ENCODE measurements at regions of chr11 and their contacts with region 1.

Region 1: GRCh38 chr11:120172054-120172911 is 34.4 kb upstream of the TRIM29 start:
- DNase-seq: peak; percentile 60
- ATAC-seq: peak; percentile 73
- H3K4me3 ChIP-seq: no peak overlapping the region
- H3K27ac ChIP-seq: no peak overlapping the region
- H3K4me1 ChIP-seq: no peaks in the 10 kb centered on the region; the same call in 1 of the 2 replicates
- H3K27me3 ChIP-seq: peaks cover 56% of the 10 kb centered on the region
- CTCF ChIP-seq: peak; percentile 94
- POLR2A ChIP-seq: peak; percentile 60; the same call in 1 of the 2 replicates
- RAD21 ChIP-seq: peak; percentile 97

Region 2: GRCh38 chr11:119666463-119667131 is 505.7 kb before region 1 on chr11:
- CTCF ChIA-PET with region 1: no interaction called
- POLR2A ChIA-PET with region 1: no interaction called
- dilution Hi-C with region 1: no loop called
- in situ Hi-C with region 1: no loop called
- intact Hi-C with region 1: loop called (anchors 1 kb)
- DNase-seq: peak; percentile 47
- ATAC-seq: peak; percentile 95
- H3K4me3 ChIP-seq: no peak overlapping the region
- H3K27ac ChIP-seq: no peak overlapping the region
- H3K4me1 ChIP-seq: peaks cover 4% of the 10 kb centered on the region; the same call in 1 of the 2 replicates
- H3K27me3 ChIP-seq: no peaks in the 10 kb centered on the region
- CTCF ChIP-seq: peak; percentile 94
- POLR2A ChIP-seq: peak; percentile 35; the same call in 1 of the 2 replicates
- RAD21 ChIP-seq: peak; percentile 98

Region 3: DNA sequence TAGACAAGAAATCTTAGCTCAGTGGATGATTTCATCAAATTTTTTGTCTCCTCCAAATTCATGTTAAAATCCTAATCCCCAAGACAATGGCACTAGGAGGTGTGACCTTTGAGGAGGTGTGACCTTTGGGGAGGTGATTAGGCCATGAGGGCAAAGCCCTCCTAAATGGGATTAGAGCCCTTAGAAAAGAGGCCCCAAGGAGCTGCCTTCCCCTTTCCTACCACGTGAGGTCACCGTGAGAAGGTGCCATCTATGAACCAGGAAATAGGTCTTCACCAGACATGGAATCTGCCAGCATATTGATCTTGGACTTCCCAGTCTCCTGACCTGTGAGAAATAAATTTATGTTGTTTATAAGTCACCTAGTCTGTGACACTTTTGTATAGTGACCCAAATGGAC is 173.1 kb before region 1 on chr11:
- CTCF ChIA-PET with region 1: no interaction called
- POLR2A ChIA-PET with region 1: no interaction called
- dilution Hi-C with region 1: no loop called
- in situ Hi-C with region 1: no loop called
- intact Hi-C with region 1: no loop called
- DNase-seq: no peak
- ATAC-seq: no peak
- H3K4me3 ChIP-seq: no peak overlapping the region
- H3K27ac ChIP-seq: no peak overlapping the region
- H3K4me1 ChIP-seq: no peaks in the 10 kb centered on the region
- H3K27me3 ChIP-seq: peaks cover 6% of the 10 kb centered on the region
- CTCF ChIP-seq: no peak
- POLR2A ChIP-seq: no peak
- RAD21 ChIP-seq: no peak

Region 4: GRCh38 chr11:120200677-120201076 is 28.4 kb after region 1 on chr11:
- CTCF ChIA-PET with region 1: no interaction called
- POLR2A ChIA-PET with region 1: no interaction called
- dilution Hi-C with region 1: no loop called
- in situ Hi-C with region 1: no loop called
- intact Hi-C with region 1: no loop called
- DNase-seq: no peak
- ATAC-seq: no peak
- H3K4me3 ChIP-seq: no peak overlapping the region
- H3K27ac ChIP-seq: no peak overlapping the region
- H3K4me1 ChIP-seq: peaks cover 3% of the 10 kb centered on the region
- H3K27me3 ChIP-seq: peaks cover 36% of the 10 kb centered on the region
- CTCF ChIP-seq: no peak
- POLR2A ChIP-seq: no peak
- RAD21 ChIP-seq: no peak

Region 5: GRCh38 chr11:120210626-120211521 is 38.6 kb after region 1 on chr11 and contains the start of gene OAF:
- CTCF ChIA-PET with region 1: no interaction called
- POLR2A ChIA-PET with region 1: interaction called, 6 read pairs
- dilution Hi-C with region 1: no loop called
- in situ Hi-C with region 1: no loop called
- intact Hi-C with region 1: loop called (anchors 5 kb)
- DNase-seq: peak; percentile 83
- ATAC-seq: peak; percentile 82
- H3K4me3 ChIP-seq: peak within 1 kb of the TSS; percentile 77
- H3K27ac ChIP-seq: peak within 1 kb of the TSS; percentile 92
- H3K4me1 ChIP-seq: peaks cover 17% of the 10 kb centered on the region
- H3K27me3 ChIP-seq: no peaks in the 10 kb centered on the region
- CTCF ChIP-seq: peak; percentile 26; the same call in 1 of the 2 replicates
- POLR2A ChIP-seq: peak; percentile 56
- RAD21 ChIP-seq: no peak
- total RNA-seq, gene OAF: 9.9 and 10.8 TPM in 2 replicates

Region 6: DNA sequence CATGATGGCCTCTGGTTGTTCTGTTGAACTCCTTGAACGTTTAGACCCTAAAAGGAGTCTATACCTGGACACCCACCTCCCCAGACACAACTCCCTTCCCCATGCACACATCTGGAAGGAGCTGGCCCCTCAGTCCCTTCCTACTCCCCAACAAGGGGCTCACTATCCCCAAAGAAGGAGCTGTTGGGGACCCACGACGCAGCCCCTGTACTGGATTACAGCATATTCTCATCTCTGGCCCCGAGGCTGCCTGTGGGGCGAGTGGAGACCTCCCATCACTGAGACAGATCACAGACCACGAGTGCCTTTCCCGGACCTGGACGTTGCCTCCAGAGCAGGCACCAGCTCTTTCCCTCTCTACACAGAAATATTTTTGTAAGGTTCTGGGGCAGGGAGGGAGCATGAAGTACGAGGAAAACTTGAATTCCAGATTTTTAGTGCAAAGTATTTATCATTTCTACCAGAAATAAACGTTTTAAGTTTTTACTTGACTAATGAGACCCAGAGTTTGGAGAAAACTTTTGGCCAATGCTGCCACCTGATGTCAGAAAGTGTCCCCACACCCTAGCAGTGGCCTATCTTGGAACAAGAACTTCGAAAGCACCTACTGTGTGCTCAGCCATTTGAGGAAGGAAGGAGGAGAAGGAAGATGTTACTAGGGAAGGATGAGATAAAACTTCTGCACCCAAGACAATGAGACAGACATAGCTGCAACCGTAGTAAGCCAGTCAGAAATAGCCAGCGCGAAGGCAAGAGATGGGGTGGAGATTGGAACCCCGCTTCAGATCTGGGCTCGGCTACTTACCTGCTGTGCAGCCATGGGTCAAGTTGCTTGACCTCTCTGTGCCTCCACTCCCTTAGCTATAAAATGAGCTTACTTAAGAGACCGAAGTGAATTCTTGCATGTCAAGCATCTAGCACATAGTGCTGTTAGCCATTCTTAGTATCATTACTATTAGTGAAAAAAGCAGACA is 57.5 kb after region 1 on chr11:
- CTCF ChIA-PET with region 1: interaction called, 3 read pairs
- POLR2A ChIA-PET with region 1: no interaction called
- dilution Hi-C with region 1: no loop called
- in situ Hi-C with region 1: loop called (anchors 5 kb)
- intact Hi-C with region 1: loop called (anchors 1 kb)
- DNase-seq: peak; percentile 29
- ATAC-seq: peak; percentile 68; the same call in 1 of the 2 replicates
- H3K4me3 ChIP-seq: no peak overlapping the region
- H3K27ac ChIP-seq: no peak overlapping the region
- H3K4me1 ChIP-seq: no peaks in the 10 kb centered on the region
- H3K27me3 ChIP-seq: peaks cover 15% of the 10 kb centered on the region
- CTCF ChIP-seq: peak; percentile 59
- POLR2A ChIP-seq: no peak
- RAD21 ChIP-seq: peak; percentile 73

Region 7: DNA sequence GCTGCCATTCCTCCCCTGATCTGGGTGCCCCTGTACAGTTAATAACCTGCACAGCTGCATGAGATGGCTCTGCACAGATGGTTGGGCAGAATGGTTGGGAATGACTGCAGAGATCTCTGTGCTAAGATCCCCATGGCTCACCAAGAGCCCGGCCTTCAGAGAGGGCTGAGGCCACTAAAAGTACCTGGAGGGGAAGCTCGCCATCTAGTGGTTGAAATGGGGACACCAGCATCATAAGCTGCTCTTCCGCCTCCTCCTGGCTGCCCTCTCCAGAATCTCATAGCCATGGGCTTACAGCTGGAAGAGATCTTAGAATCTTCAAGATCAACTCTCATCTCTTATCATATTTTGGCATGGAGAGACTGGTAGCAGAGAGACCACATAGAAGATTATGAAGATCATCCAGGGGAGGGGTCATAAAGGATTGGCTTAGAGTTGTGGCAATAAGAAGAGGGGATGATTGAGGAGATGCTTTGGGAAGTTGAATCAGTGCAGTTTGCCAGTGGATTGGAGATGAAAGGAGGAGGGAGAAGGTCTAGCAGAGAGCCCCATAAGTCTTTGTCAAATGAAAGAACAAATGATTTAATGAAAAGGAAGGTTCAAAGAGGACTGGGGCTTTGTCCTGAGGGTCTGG is 130.8 kb after region 1 on chr11:
- CTCF ChIA-PET with region 1: interaction called, 15 read pairs
- POLR2A ChIA-PET with region 1: no interaction called
- dilution Hi-C with region 1: no loop called
- in situ Hi-C with region 1: loop called (anchors 5 kb)
- intact Hi-C with region 1: loop called (anchors 1 kb)
- DNase-seq: peak; percentile 80
- ATAC-seq: peak; percentile 74
- H3K4me3 ChIP-seq: no peak overlapping the region
- H3K27ac ChIP-seq: no peak overlapping the region
- H3K4me1 ChIP-seq: peaks cover 6% of the 10 kb centered on the region; the same call in 1 of the 2 replicates
- H3K27me3 ChIP-seq: peaks cover 16% of the 10 kb centered on the region
- CTCF ChIP-seq: peak; percentile 99
- POLR2A ChIP-seq: no peak
- RAD21 ChIP-seq: peak; percentile 75